ENCODE measurements at regions of chr2 and their contacts with region 1.

Region 1: GRCh38 chr2:46555011-46555410 is 75.6 kb downstream of the TMEM247 start:
- DNase-seq: peak; percentile 28
- H3K4me3 ChIP-seq: no peak overlapping the region
- H3K27ac ChIP-seq: no peak overlapping the region
- H3K4me1 ChIP-seq: peaks cover 0 to 21% of the 10 kb centered on the region in 2 experiments; a peak in 1 of 4 replicates
- H3K27me3 ChIP-seq: no peaks in the 10 kb centered on the region
- CTCF ChIP-seq: peak; percentile 59
- EP300 ChIP-seq: no peak
- RAD21 ChIP-seq: peak; percentile 28; the same call in 1 of the 2 replicates

Region 2: DNA sequence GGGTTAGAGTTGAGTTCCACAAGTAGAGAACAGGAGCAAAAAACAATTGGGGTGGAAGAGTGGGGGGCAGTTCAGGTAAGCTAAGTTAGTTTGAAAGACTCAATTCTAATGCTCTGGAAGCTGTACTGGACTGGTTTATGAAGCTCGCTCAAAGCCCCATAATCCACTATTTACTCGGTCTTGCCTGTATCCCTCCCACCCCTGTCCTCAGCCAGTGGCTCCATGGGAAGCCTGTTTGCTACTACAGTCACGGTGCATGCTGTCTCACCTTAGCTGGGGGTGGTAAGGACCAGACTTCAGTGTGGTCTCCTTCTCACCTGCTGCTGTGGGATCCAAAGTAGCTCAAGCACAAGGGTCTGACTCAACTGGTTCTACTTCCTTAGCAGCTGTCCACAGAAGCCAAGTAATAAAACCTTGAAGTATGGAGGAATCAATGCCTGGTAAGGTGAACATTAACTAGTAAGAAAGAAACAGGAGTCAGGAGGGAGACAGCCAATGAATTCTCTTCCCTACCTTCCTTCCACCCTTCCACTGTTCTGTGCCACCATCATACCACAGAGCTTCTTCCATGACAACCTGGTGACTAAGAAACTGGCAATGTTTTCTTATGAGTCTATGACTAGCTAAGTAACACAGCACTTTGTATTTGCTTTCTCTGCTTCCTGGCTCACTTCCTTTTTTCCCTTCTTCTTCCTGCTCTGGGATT is 1174.7 kb before region 1 on chr2:
- CTCF ChIA-PET with region 1: no interaction called
- POLR2A ChIA-PET with region 1: no interaction called
- DNase-seq: no peak
- H3K4me3 ChIP-seq: no peak overlapping the region
- H3K27ac ChIP-seq: peak overlapping the region in 1 of 2 experiments; percentile 33; a peak in 2 of 4 replicates
- H3K4me1 ChIP-seq: peaks cover 0 to 8% of the 10 kb centered on the region in 2 experiments; a peak in 2 of 4 replicates
- H3K27me3 ChIP-seq: no peaks in the 10 kb centered on the region
- CTCF ChIP-seq: no peak
- EP300 ChIP-seq: no peak
- RAD21 ChIP-seq: no peak

Region 3: DNA sequence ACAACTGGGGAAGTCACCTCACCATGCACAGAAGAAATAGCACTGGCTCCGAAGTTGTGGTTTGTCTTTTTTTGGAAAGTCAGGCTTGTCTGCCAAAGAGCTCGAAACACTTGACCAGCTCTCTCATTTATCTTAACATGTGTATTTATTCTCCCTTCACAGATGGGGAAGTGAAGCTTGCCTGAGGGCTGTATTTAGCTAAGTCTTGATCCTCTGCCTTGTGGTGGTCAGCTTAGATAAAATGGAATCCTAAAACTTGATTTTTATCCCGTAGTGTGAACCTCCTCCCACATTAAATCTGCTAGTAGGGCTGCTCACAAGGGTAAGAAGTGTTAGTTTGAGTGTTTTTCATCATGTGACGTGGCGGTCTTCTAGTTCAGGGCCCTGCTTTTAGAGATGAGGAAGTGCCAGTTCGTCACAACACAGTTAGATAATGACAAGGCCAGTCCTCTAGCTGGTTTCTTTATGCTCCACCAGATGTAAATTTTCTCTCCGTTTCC is 14.1 kb after region 1 on chr2:
- CTCF ChIA-PET with region 1: interaction called, 23 read pairs
- POLR2A ChIA-PET with region 1: no interaction called
- DNase-seq: no peak
- H3K4me3 ChIP-seq: no peak overlapping the region
- H3K27ac ChIP-seq: peak overlapping the region in 1 of 2 experiments; percentile 40; a peak in 2 of 4 replicates
- H3K4me1 ChIP-seq: peaks cover under 1 to 20% of the 10 kb centered on the region in 2 experiments; a peak in 3 of 4 replicates
- H3K27me3 ChIP-seq: no peaks in the 10 kb centered on the region
- CTCF ChIP-seq: no peak
- EP300 ChIP-seq: no peak
- RAD21 ChIP-seq: no peak

Measured in SK-N-SH (cell line).